ENCODE measurements at regions of chrX and their contacts with region 1.

Region 1: DNA sequence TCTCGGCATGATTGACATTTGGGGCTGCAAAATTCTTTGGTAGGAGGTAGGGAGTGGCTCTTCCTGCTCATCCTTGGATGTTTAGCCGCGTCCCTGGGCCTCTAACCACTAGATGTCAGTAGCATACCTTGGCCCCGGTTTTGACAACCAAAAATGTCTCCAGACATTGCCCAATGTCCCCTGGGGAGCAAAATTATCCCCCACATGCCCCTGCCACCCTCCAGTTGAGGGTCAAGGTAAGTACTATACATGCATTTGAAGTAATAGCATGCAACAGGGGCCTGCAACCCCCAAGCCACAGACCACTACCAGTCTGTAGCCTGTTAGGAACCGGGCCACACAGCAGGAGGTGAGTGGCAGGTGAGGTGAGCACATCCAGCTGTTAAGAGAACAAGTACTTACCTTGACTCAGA is 17.6 kb upstream of the KIAA1210 start:
- DNase-seq: no peak
- ATAC-seq: peak; percentile 72
- H3K4me3 ChIP-seq: no peak overlapping the region
- H3K27ac ChIP-seq: no peak overlapping the region
- H3K4me1 ChIP-seq: no peaks in the 10 kb centered on the region
- H3K27me3 ChIP-seq: no peaks in the 10 kb centered on the region; the same call in none of the 2 replicates
- CTCF ChIP-seq: peak; percentile 77

Region 2: GRCh38 chrX:119222932-119223331 is 77.7 kb after region 1 on chrX:
- CTCF ChIA-PET with region 1: no interaction called
- POLR2A ChIA-PET with region 1: no interaction called
- in situ Hi-C with region 1: no loop called
- intact Hi-C with region 1: loop called (anchors 2 kb)
- DNase-seq: no peak
- ATAC-seq: no peak
- H3K4me3 ChIP-seq: no peak overlapping the region
- H3K27ac ChIP-seq: no peak overlapping the region
- H3K4me1 ChIP-seq: no peaks in the 10 kb centered on the region
- H3K27me3 ChIP-seq: 0 out of 2 replicates have a peak, but pooled peaks cover 4% of the 10 kb centered on the region
- CTCF ChIP-seq: no peak